CD4-positive, alpha-beta memory T cell (primary cell): ENCODE measurements at regions of chr12 and their contacts with region 1.

Region 1: DNA sequence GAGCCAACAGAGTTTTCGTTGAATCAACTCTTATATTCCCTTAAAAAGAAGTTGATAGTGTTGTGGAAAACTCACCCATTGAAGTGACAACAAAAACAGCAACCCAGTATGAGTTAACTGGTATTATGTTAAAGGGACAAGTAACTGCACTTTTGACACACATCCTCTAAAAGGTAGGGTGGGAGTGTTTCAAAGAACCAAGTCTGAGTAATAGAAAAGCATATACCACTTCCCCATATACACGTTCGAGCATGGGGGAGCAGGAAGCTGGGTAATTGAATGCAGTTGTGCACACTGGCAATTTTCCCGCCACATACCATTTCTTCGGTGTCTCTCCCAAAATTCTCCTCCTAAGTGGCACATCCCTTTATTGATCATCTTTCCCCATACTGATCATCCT is 31.5 kb downstream of the IFNG-AS1 start:
- DNase-seq: no peak
- H3K4me3 ChIP-seq: no peak overlapping the region
- H3K4me3 Mint-ChIP-seq: no peak overlapping the region
- H3K27ac ChIP-seq: no peak overlapping the region
- H3K27ac Mint-ChIP-seq: no peak overlapping the region
- H3K4me1 ChIP-seq: no peaks in the 10 kb centered on the region
- H3K4me1 Mint-ChIP-seq: no peaks in the 10 kb centered on the region
- H3K27me3 ChIP-seq: no peaks in the 10 kb centered on the region
- H3K27me3 Mint-ChIP-seq: no peaks in the 10 kb centered on the region

Region 2: DNA sequence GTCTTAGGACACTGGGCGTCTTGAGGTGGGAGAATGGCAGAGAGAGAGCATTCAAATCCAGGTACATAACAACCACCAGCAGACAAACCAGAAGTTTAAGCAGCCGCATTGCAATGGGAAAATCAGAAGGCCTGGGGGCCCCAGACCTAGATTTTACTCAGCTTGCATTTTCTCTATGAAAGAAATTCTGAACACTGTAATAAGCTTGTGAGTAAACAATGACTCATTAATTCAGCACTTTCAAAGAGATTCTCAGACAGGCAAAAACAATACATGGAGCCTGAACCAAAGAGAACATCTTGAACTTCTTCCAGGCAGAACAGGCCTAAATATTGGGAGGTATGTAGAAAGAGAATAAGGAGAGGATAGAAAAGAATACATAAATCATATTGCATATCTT is 101.3 kb before region 1 on chr12:
- CTCF ChIA-PET with region 1: no interaction called
- POLR2A ChIA-PET with region 1: no interaction called
- intact Hi-C with region 1: no loop called
- DNase-seq: no peak
- H3K4me3 ChIP-seq: no peak overlapping the region
- H3K4me3 Mint-ChIP-seq: no peak overlapping the region
- H3K27ac ChIP-seq: no peak overlapping the region
- H3K27ac Mint-ChIP-seq: no peak overlapping the region
- H3K4me1 ChIP-seq: no peaks in the 10 kb centered on the region
- H3K4me1 Mint-ChIP-seq: peaks cover 0 to 3% (median 1%) of the 10 kb centered on the region in 4 donors
- H3K27me3 ChIP-seq: no peaks in the 10 kb centered on the region
- H3K27me3 Mint-ChIP-seq: peaks cover 0 to 5% of the 10 kb centered on the region in 2 donors

Region 3: GRCh38 chr12:68040450-68041075 is 19.9 kb after region 1 on chr12:
- CTCF ChIA-PET with region 1: interaction called, 12 read pairs
- POLR2A ChIA-PET with region 1: no interaction called
- intact Hi-C with region 1: no loop called
- DNase-seq: peak; percentile 60 to 69 (median 65)
- H3K4me3 ChIP-seq: no peak overlapping the region
- H3K4me3 Mint-ChIP-seq: peak overlapping the region in 4 of 8 donors; percentile 2 to 29 (median 16)
- H3K27ac ChIP-seq: no peak overlapping the region
- H3K27ac Mint-ChIP-seq: peak overlapping the region in 5 of 7 donors; percentile 2 to 82 (median 34)
- H3K4me1 ChIP-seq: peaks cover 12% of the 10 kb centered on the region
- H3K4me1 Mint-ChIP-seq: peaks cover 12 to 19% (median 16%) of the 10 kb centered on the region in 4 donors
- H3K27me3 ChIP-seq: no peaks in the 10 kb centered on the region
- H3K27me3 Mint-ChIP-seq: no peaks in the 10 kb centered on the region